OCI-LY7 (cell line): ENCODE measurements at regions of chr16 and their contacts with region 1.

Region 1: GRCh38 chr16:56911771-56912571 is 20.0 kb upstream of the HERPUD1 start:
- DNase-seq: peak; percentile 88
- H3K4me3 ChIP-seq: peak overlapping the region; percentile 46
- H3K27ac ChIP-seq: peak overlapping the region; percentile 84
- H3K4me1 ChIP-seq: peaks cover 78% of the 10 kb centered on the region
- CTCF ChIP-seq: no peak

Region 2: GRCh38 chr16:56814537-56815432 is 97.2 kb before region 1 on chr16:
- CTCF ChIA-PET with region 1: no interaction called
- POLR2A ChIA-PET with region 1: no interaction called
- intact Hi-C with region 1: no loop called
- DNase-seq: no peak
- H3K4me3 ChIP-seq: no peak overlapping the region
- H3K27ac ChIP-seq: no peak overlapping the region
- H3K4me1 ChIP-seq: no peaks in the 10 kb centered on the region
- CTCF ChIP-seq: no peak

Region 3: DNA sequence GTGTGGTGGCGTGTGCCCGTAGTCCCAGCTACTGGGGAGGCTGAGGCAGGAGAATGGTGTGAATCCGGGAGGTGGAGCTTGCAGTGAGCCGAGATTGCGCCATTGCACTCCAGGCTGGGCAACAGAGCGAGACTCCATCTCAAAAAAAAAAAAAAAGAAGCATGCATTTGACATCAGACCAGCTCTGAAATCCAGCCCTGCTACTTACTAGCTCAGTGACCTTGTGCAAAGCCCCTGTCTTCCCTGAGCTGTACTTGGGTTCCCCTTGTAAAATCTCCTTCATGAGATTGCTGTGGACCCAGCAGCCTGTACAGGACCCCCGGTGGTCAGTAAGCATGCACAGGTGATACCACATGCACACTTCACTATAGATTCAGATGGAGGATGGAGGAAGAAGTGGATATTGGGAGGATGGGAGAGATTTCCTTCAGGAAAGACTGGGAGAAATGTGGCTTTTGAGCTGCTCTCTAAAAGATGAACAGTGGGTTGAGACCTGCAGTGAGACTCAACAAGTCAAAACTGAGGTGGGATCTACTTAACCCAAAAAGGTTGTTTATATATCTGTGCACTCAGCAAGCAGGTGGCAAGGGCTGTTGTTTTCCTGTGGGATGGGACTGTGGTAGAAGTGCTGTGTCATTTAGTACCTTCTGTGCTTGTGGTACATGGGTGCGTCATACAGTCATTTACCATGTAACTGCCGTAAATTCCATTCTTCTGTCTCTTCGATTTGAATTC is 26.6 kb after region 1 on chr16:
- CTCF ChIA-PET with region 1: no interaction called
- POLR2A ChIA-PET with region 1: interaction called, 256 read pairs
- intact Hi-C with region 1: no loop called
- DNase-seq: no peak
- H3K4me3 ChIP-seq: peak overlapping the region; percentile 48
- H3K27ac ChIP-seq: peak overlapping the region; percentile 50
- H3K4me1 ChIP-seq: peaks cover 77% of the 10 kb centered on the region
- CTCF ChIP-seq: no peak